ENCODE measurements at regions of chr14 and their contacts with region 1.

Region 1: GRCh38 chr14:69726761-69727511 is 40.0 kb upstream of the SRSF5 start:
- DNase-seq: no peak
- H3K4me3 ChIP-seq: peak overlapping the region; percentile 25 to 40
- H3K27ac ChIP-seq: peak overlapping the region; percentile 63
- H3K4me1 ChIP-seq: peaks cover 8% of the 10 kb centered on the region
- H3K27me3 ChIP-seq: no peaks in the 10 kb centered on the region
- CTCF ChIP-seq: peak; percentile 90 to 99 (median 97)
- POLR2A ChIP-seq: no peak

Region 2: DNA sequence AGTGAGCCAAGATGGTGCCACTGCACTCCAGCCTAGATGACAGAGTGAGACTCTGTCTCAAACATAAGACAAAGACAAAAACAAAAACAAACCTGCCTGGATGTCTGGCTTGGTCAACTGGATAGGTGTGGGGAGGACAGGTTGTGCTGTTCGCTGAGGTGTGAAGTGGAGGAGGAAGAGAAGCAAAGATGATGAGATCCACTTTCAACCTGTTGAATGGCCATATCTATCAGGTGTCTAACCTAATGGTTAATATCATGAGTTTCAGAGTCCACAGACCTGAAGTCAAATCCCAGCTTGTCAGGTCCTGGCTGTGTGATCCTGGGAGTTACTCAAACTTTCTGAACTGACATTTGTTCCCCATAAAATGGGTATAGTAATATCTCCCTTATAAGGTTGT is 142.5 kb before region 1 on chr14:
- intact Hi-C with region 1: loop called (anchors 2 kb)
- DNase-seq: no peak
- H3K4me3 ChIP-seq: no peak overlapping the region
- H3K27ac ChIP-seq: no peak overlapping the region
- H3K4me1 ChIP-seq: peaks cover 13% of the 10 kb centered on the region
- H3K27me3 ChIP-seq: no peaks in the 10 kb centered on the region
- CTCF ChIP-seq: no peak
- POLR2A ChIP-seq: no peak

Region 3: DNA sequence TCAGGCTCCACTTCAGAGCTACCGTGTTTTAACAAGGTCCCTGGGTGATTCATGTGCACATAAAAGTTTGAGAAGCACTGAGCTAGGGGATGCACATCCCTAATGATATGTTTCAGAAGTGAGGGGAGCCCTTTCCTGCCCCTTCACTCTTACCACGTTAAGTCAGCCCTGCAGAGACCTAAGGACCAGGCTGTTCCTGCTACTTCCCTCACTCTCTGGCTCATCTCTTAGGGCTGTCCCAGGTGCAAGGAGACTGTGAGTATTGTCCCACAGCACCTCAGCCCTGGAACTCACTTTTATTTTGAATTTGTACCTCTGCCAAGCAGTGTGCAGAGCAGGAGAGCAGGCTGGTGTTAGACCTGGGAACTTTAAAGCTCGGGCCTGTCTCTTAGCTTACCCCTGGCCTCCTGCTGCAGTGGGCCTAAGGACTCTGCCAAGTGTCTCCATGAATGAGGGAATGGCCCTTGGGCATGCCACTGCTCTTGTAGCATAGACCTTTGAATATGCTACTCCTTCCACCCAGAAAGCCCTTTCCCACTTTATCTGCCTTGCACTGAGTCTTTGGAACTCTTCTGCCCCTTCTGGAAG is 126.5 kb before region 1 on chr14:
- intact Hi-C with region 1: loop called (anchors 5 kb)
- DNase-seq: no peak
- H3K4me3 ChIP-seq: no peak overlapping the region
- H3K27ac ChIP-seq: no peak overlapping the region
- H3K4me1 ChIP-seq: no peaks in the 10 kb centered on the region
- H3K27me3 ChIP-seq: no peaks in the 10 kb centered on the region
- CTCF ChIP-seq: no peak
- POLR2A ChIP-seq: no peak